ENCODE measurements at regions of chr10 and their contacts with region 1.

Region 1: GRCh38 chr10:74011770-74012169 is 13.9 kb downstream of the VCL start:
- DNase-seq: no peak
- H3K4me3 ChIP-seq: peak overlapping the region; percentile 50
- H3K27ac ChIP-seq: peak overlapping the region; percentile 95
- H3K4me1 ChIP-seq: peaks cover 83% of the 10 kb centered on the region
- CTCF ChIP-seq: no peak

Region 2: GRCh38 chr10:73997787-73998622 is 13.8 kb before region 1 on chr10 and contains the start of gene VCL:
- CTCF ChIA-PET with region 1: interaction called, 4 read pairs
- POLR2A ChIA-PET with region 1: interaction called, 48 read pairs
- intact Hi-C with region 1: loop called (anchors 1 kb)
- DNase-seq: peak; percentile 95
- H3K4me3 ChIP-seq: peak within 1 kb of the TSS; percentile 93
- H3K27ac ChIP-seq: peak within 1 kb of the TSS; percentile 56
- H3K4me1 ChIP-seq: peaks cover 34% of the 10 kb centered on the region
- CTCF ChIP-seq: no peak
- total RNA-seq, gene VCL: 19.1 and 24.9 TPM in 2 replicates

Region 3: GRCh38 chr10:74026428-74027015 is 14.8 kb after region 1 on chr10:
- CTCF ChIA-PET with region 1: no interaction called
- POLR2A ChIA-PET with region 1: interaction called, 30 read pairs
- intact Hi-C with region 1: no loop called
- DNase-seq: no peak
- H3K4me3 ChIP-seq: no peak overlapping the region
- H3K27ac ChIP-seq: no peak overlapping the region
- H3K4me1 ChIP-seq: no peaks in the 10 kb centered on the region
- CTCF ChIP-seq: no peak